Mammary epithelial cell (primary cell): ENCODE measurements at regions of chr6 and their contacts with region 1.

Region 1: GRCh38 chr6:47097092-47097945 is 55.2 kb upstream of the ADGRF1 start:
- DNase-seq: peak; percentile 81
- H3K4me3 ChIP-seq: no peak overlapping the region
- H3K27ac ChIP-seq: no peak overlapping the region
- H3K4me1 ChIP-seq: peaks cover 54% of the 10 kb centered on the region
- H3K27me3 ChIP-seq: no peaks in the 10 kb centered on the region
- CTCF ChIP-seq: peak; percentile 80 to 82

Region 2: GRCh38 chr6:47047479-47048407 is 49.6 kb before region 1 on chr6:
- CTCF ChIA-PET with region 1: no interaction called
- dilution Hi-C with region 1: no loop called
- in situ Hi-C with region 1: no loop called
- intact Hi-C with region 1: loop called (anchors 1 kb)
- DNase-seq: peak; percentile 75
- H3K4me3 ChIP-seq: no peak overlapping the region
- H3K27ac ChIP-seq: peak overlapping the region; percentile 37
- H3K4me1 ChIP-seq: peaks cover 44% of the 10 kb centered on the region
- H3K27me3 ChIP-seq: no peaks in the 10 kb centered on the region
- CTCF ChIP-seq: peak; percentile 83 to 86

Region 3: GRCh38 chr6:47073125-47074110 is 23.9 kb before region 1 on chr6:
- CTCF ChIA-PET with region 1: no interaction called
- dilution Hi-C with region 1: no loop called
- in situ Hi-C with region 1: no loop called
- intact Hi-C with region 1: no loop called
- DNase-seq: no peak
- H3K4me3 ChIP-seq: no peak overlapping the region
- H3K27ac ChIP-seq: no peak overlapping the region
- H3K4me1 ChIP-seq: peaks cover 24% of the 10 kb centered on the region
- H3K27me3 ChIP-seq: no peaks in the 10 kb centered on the region
- CTCF ChIP-seq: peak; percentile 23 to 42

Region 4: DNA sequence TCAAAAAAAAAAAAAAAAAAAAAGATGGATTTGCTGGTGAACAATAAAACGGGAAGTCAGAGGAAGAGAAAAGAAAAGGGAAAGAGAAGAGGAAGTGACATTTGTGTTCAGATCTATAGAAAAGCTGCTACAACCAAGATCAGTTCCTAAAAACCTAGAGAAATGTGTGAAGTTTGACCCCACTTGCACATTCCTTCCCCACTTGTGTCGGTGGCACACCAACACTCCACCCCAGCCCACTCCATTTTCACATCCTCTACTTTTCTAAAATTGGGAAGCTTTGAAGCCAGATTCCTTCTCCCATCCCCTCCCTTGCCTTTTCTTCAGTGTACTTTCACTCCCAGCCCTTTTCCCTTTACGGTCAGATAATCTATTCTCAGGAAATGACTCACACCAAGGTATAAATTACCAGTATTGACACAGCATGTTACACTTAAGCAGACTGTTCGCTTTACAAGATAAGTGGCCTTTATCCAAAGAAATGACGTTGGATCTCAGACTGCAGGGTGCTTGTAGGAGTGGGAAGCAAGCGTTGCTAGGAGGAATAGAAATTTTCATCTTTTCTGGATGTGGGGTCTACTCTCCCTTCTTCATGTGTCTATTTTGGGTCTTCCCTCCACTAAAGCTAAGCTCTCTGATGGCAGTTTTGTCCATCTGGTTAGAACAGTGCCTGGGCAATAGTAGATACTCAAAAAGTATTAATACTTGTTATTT is 37.3 kb after region 1 on chr6:
- CTCF ChIA-PET with region 1: no interaction called
- dilution Hi-C with region 1: no loop called
- in situ Hi-C with region 1: no loop called
- intact Hi-C with region 1: loop called (anchors 2 kb)
- DNase-seq: peak; percentile 94
- H3K4me3 ChIP-seq: peak overlapping the region in 1 of 3 experiments; percentile 18
- H3K27ac ChIP-seq: peak overlapping the region; percentile 98
- H3K4me1 ChIP-seq: peaks cover 29% of the 10 kb centered on the region
- H3K27me3 ChIP-seq: no peaks in the 10 kb centered on the region
- CTCF ChIP-seq: no peak

Region 5: DNA sequence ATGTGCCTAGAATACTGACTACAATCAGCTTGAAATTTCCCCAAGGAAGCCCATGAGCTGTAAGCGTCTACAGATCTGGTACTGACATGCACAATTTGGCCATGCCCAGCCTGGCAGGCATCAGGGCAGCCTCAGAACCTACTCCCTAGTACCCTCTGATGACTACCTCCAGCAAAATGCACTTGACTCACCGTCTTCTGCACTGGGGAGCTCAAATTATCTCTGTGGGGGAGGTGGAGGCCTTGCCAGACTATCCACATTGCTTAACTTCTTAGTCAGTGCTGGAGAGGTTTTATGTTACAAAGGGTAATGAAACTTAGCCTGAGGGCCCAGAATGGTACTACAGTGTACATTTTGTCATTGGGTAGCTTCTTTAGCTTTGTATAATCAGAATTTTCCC is 70.9 kb after region 1 on chr6:
- CTCF ChIA-PET with region 1: no interaction called
- dilution Hi-C with region 1: loop called (anchors 5 kb)
- in situ Hi-C with region 1: no loop called
- intact Hi-C with region 1: loop called (anchors 1 kb)
- DNase-seq: peak; percentile 99
- H3K4me3 ChIP-seq: no peak overlapping the region
- H3K27ac ChIP-seq: peak overlapping the region; percentile 84
- H3K4me1 ChIP-seq: peaks cover 57% of the 10 kb centered on the region
- H3K27me3 ChIP-seq: no peaks in the 10 kb centered on the region
- CTCF ChIP-seq: no peak

Region 6: GRCh38 chr6:47229255-47229654 is 131.9 kb after region 1 on chr6:
- CTCF ChIA-PET with region 1: no interaction called
- dilution Hi-C with region 1: no loop called
- in situ Hi-C with region 1: no loop called
- intact Hi-C with region 1: loop called (anchors 5 kb)
- DNase-seq: no peak
- H3K4me3 ChIP-seq: no peak overlapping the region
- H3K27ac ChIP-seq: no peak overlapping the region
- H3K4me1 ChIP-seq: no peaks in the 10 kb centered on the region
- H3K27me3 ChIP-seq: no peaks in the 10 kb centered on the region
- CTCF ChIP-seq: no peak

Region 7: DNA sequence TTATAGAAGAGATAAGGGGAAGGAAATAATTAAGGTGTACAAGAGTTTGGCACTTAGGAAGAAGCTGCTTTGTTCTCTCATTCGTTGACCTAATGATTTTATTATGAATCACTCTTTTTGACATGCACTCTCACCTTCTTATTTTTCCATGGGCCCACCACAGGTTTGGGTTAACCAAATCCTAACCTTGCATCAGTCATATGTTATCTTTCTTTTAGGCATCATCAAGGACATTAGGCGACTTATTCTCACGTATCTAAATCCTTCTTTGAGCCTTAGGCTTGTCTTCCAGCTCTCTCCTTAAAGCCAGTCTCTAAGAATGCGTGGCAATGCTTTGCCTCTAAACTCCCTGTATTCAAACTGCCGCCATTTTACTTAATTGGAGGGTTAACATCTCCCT is 154.1 kb after region 1 on chr6:
- CTCF ChIA-PET with region 1: no interaction called
- dilution Hi-C with region 1: no loop called
- in situ Hi-C with region 1: no loop called
- intact Hi-C with region 1: loop called (anchors 1 kb)
- DNase-seq: no peak
- H3K4me3 ChIP-seq: no peak overlapping the region
- H3K27ac ChIP-seq: no peak overlapping the region
- H3K4me1 ChIP-seq: peaks cover 2% of the 10 kb centered on the region
- H3K27me3 ChIP-seq: no peaks in the 10 kb centered on the region
- CTCF ChIP-seq: no peak

Region 8: GRCh38 chr6:47278550-47278949 is 181.2 kb after region 1 on chr6:
- CTCF ChIA-PET with region 1: no interaction called
- dilution Hi-C with region 1: no loop called
- in situ Hi-C with region 1: no loop called
- intact Hi-C with region 1: no loop called
- DNase-seq: no peak
- H3K4me3 ChIP-seq: no peak overlapping the region
- H3K27ac ChIP-seq: no peak overlapping the region
- H3K4me1 ChIP-seq: peaks cover 7% of the 10 kb centered on the region
- H3K27me3 ChIP-seq: no peaks in the 10 kb centered on the region
- CTCF ChIP-seq: no peak

Region 9: GRCh38 chr6:47413752-47414422 is 316.6 kb after region 1 on chr6:
- CTCF ChIA-PET with region 1: no interaction called
- dilution Hi-C with region 1: no loop called
- in situ Hi-C with region 1: no loop called
- intact Hi-C with region 1: loop called (anchors 2 kb)
- DNase-seq: peak; percentile 67
- H3K4me3 ChIP-seq: peak overlapping the region; percentile 43 to 45 (median 45)
- H3K27ac ChIP-seq: peak overlapping the region; percentile 61
- H3K4me1 ChIP-seq: peaks cover 5% of the 10 kb centered on the region
- H3K27me3 ChIP-seq: no peaks in the 10 kb centered on the region
- CTCF ChIP-seq: peak; percentile 88 to 96